PC-9 (cell line): ENCODE measurements at regions of chr3 and their contacts with region 1.

Region 1: GRCh38 chr3:197749601-197750395 is at the start of gene FYTTD1:
- DNase-seq: peak; percentile 72 to 96
- H3K4me3 ChIP-seq: peak within 1 kb of the TSS; percentile 79
- H3K27ac ChIP-seq: peak within 1 kb of the TSS; percentile 76
- H3K4me1 ChIP-seq: peaks cover 25% of the 10 kb centered on the region
- H3K27me3 ChIP-seq: no peaks in the 10 kb centered on the region
- CTCF ChIP-seq: peak; percentile 41
- total RNA-seq, gene FYTTD1: 75.4 and 78.3 TPM in 2 replicates

Region 2: DNA sequence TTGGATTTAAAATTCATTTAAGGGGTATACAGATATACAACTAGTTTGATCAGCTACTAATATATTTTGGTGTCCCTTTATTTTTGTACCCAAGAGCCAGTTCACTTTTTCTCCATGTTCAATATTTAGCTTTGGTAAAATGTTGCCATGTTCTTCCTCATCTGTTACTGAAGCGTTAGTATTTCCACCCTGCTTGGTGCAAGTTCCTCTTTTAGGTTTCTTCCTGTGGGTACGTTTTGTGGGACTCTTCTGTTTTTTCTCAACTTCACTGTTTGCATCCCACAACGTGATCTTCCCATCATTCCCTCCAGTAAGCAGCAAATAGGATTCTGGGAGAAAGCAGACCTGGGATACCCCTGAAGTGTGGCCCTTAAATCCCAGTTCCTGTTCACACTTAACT is 1195.6 kb before region 1 on chr3:
- CTCF ChIA-PET with region 1: no interaction called
- POLR2A ChIA-PET with region 1: no interaction called
- intact Hi-C with region 1: no loop called
- DNase-seq: no peak
- H3K4me3 ChIP-seq: no peak overlapping the region
- H3K27ac ChIP-seq: no peak overlapping the region
- H3K4me1 ChIP-seq: peaks cover 6% of the 10 kb centered on the region
- H3K27me3 ChIP-seq: no peaks in the 10 kb centered on the region
- CTCF ChIP-seq: no peak

Region 3: GRCh38 chr3:197567904-197568681 is 181.7 kb before region 1 on chr3:
- CTCF ChIA-PET with region 1: interaction called, 14 read pairs
- POLR2A ChIA-PET with region 1: no interaction called
- intact Hi-C with region 1: no loop called
- DNase-seq: peak in 1 of 2 experiments; percentile 24
- H3K4me3 ChIP-seq: no peak overlapping the region
- H3K27ac ChIP-seq: no peak overlapping the region
- H3K4me1 ChIP-seq: no peaks in the 10 kb centered on the region
- H3K27me3 ChIP-seq: no peaks in the 10 kb centered on the region
- CTCF ChIP-seq: no peak

Region 4: GRCh38 chr3:197711973-197712707 is 37.7 kb before region 1 on chr3:
- CTCF ChIA-PET with region 1: no interaction called
- POLR2A ChIA-PET with region 1: no interaction called
- intact Hi-C with region 1: loop called (anchors 1 kb)
- DNase-seq: peak; percentile 93 to 100
- H3K4me3 ChIP-seq: peak overlapping the region; percentile 41; the same call in 1 of the 2 replicates
- H3K27ac ChIP-seq: peak overlapping the region; percentile 98
- H3K4me1 ChIP-seq: peaks cover 38% of the 10 kb centered on the region
- H3K27me3 ChIP-seq: no peaks in the 10 kb centered on the region
- CTCF ChIP-seq: no peak

Region 5: GRCh38 chr3:197736491-197737318 is 13.1 kb before region 1 on chr3 and contains the start of gene RUBCN:
- CTCF ChIA-PET with region 1: interaction called, 3 read pairs
- POLR2A ChIA-PET with region 1: no interaction called
- intact Hi-C with region 1: loop called (anchors 1 kb)
- DNase-seq: peak; percentile 95 to 99
- H3K4me3 ChIP-seq: peak within 1 kb of the TSS; percentile 73
- H3K27ac ChIP-seq: peak within 1 kb of the TSS; percentile 79
- H3K4me1 ChIP-seq: peaks cover 22% of the 10 kb centered on the region
- H3K27me3 ChIP-seq: no peaks in the 10 kb centered on the region
- CTCF ChIP-seq: no peak
- total RNA-seq, gene RUBCN: 34.2 and 41.1 TPM in 2 replicates

Region 6: GRCh38 chr3:197854596-197855343 is 105.0 kb after region 1 on chr3:
- CTCF ChIA-PET with region 1: no interaction called
- POLR2A ChIA-PET with region 1: no interaction called
- intact Hi-C with region 1: no loop called
- DNase-seq: no peak
- H3K4me3 ChIP-seq: no peak overlapping the region
- H3K27ac ChIP-seq: no peak overlapping the region
- H3K4me1 ChIP-seq: no peaks in the 10 kb centered on the region
- H3K27me3 ChIP-seq: no peaks in the 10 kb centered on the region
- CTCF ChIP-seq: no peak